ENCODE measurements at regions of chr7 and their contacts with region 1.

Region 1: DNA sequence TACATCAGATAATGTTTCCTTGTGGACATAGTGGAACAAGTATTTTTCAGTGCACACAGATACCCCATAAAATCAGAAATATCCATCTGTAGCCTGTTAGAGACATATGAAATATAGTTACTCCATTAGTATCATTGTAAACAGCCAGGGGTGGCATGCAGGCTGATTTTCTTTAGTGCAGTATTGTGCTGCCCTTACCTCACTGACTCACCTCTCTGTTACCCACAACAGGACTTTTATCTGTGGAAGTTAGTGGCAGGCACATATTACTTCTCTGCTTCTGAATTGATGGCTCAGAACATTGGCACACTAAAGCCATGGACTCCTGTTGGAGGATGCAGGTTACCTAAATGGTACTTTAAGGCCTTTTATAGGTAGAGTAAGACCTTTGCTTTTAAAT is 70.0 kb downstream of the SLC25A40 start:
- DNase-seq: no peak
- H3K4me3 ChIP-seq: no peak overlapping the region
- H3K27ac ChIP-seq: no peak overlapping the region
- H3K4me1 ChIP-seq: no peaks in the 10 kb centered on the region
- H3K27me3 ChIP-seq: no peaks in the 10 kb centered on the region
- CTCF ChIP-seq: no peak
- POLR2A ChIP-seq: no peak

Region 2: GRCh38 chr7:87886875-87887274 is 80.7 kb after region 1 on chr7:
- intact Hi-C with region 1: loop called (anchors 10 kb)
- DNase-seq: no peak
- H3K4me3 ChIP-seq: no peak overlapping the region
- H3K27ac ChIP-seq: no peak overlapping the region
- H3K4me1 ChIP-seq: no peaks in the 10 kb centered on the region
- H3K27me3 ChIP-seq: no peaks in the 10 kb centered on the region
- CTCF ChIP-seq: peak in 4 of 6 experiments; percentile 37 to 57 (median 44)
- POLR2A ChIP-seq: no peak

Region 3: GRCh38 chr7:88540012-88540411 is 733.9 kb after region 1 on chr7:
- intact Hi-C with region 1: no loop called
- DNase-seq: no peak
- H3K4me3 ChIP-seq: no peak overlapping the region
- H3K27ac ChIP-seq: no peak overlapping the region
- H3K4me1 ChIP-seq: no peaks in the 10 kb centered on the region
- H3K27me3 ChIP-seq: no peaks in the 10 kb centered on the region
- CTCF ChIP-seq: no peak
- POLR2A ChIP-seq: no peak

Measured in esophagus squamous epithelium (tissue), 5 donors.